ENCODE measurements at regions of chr1 and their contacts with region 1.

Region 1: DNA sequence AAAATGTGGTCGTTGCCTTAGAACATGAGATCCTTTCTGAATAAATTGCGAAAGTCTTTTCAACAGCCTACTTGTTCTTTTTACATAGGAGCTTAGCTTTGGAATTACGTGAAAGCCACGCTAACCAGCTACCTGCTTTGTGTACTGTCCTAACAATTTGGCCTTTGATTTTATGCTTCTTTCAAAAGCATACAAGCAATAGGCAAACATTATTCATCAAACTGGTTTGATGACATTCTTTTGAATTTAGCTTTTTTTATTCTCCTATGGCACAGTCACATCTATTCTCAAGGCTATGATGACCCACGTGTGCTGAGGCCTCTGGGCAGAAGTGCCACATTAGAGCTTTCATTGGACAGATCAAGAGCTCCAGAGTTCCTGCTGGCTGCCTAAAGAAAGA is 178.0 kb upstream of the DPT start:
- DNase-seq: no peak
- ATAC-seq: no peak

Region 2: GRCh38 chr1:168871531-168871930 is 35.5 kb before region 1 on chr1:
- intact Hi-C with region 1: loop called (anchors 5 kb)
- DNase-seq: no peak
- ATAC-seq: no peak

Measured in Right ventricle myocardium inferior (tissue), 1 donor.